ENCODE measurements at regions of chr1 and their contacts with region 1.

Region 1: GRCh38 chr1:32107742-32108661 is at the start of gene KPNA6:
- DNase-seq: peak; percentile 89
- ATAC-seq: peak; percentile 77
- H3K4me3 Mint-ChIP-seq: peak within 1 kb of the TSS; percentile 99
- H3K27ac Mint-ChIP-seq: peak within 1 kb of the TSS; percentile 98
- H3K4me1 Mint-ChIP-seq: peaks cover 34% of the 10 kb centered on the region
- H3K27me3 Mint-ChIP-seq: no peaks in the 10 kb centered on the region
- total RNA-seq, gene KPNA6: 63.8 to 69.8 TPM

Region 2: DNA sequence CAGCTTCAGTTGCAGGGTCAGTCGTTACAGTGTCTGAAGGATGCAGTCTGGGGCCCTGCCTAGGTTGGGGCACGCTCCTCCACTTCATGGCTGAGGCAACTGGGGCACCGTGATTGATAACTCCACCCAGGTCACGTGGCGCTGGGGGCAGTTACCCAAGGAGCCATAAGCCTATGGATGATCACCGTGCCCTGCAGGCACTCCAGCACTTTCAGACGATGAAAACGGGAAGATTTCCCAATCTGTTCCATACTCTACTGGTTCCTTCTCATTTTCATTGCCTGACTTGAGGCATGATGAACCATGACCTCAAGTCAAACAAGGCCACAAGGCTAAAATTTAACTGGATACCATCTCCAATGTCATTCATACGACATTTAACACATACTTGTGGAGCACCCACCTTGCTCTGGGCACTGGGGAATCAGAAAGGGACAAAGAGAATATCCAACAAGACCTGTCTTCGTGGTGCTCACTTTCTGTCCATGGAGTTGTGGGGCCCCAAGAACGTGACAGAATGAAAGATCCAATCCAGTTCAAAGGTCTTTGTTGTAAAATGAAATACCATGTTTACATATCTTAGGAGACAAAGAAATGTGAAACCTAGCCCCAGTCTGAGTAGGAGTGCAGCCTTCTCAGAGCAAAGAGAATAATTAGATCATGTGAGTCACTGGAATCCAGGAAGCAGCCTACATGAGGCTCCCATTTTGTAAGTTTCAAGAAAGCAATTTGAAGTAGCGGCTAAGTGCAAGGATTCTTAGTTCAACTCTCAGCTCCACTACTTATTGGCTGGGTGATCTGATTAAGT is 252.8 kb before region 1 on chr1:
- POLR2A ChIA-PET with region 1: no interaction called
- DNase-seq: no peak
- ATAC-seq: no peak
- H3K4me3 Mint-ChIP-seq: no peak overlapping the region
- H3K27ac Mint-ChIP-seq: no peak overlapping the region
- H3K4me1 Mint-ChIP-seq: peaks cover 2% of the 10 kb centered on the region
- H3K27me3 Mint-ChIP-seq: peaks cover 2% of the 10 kb centered on the region

Region 3: DNA sequence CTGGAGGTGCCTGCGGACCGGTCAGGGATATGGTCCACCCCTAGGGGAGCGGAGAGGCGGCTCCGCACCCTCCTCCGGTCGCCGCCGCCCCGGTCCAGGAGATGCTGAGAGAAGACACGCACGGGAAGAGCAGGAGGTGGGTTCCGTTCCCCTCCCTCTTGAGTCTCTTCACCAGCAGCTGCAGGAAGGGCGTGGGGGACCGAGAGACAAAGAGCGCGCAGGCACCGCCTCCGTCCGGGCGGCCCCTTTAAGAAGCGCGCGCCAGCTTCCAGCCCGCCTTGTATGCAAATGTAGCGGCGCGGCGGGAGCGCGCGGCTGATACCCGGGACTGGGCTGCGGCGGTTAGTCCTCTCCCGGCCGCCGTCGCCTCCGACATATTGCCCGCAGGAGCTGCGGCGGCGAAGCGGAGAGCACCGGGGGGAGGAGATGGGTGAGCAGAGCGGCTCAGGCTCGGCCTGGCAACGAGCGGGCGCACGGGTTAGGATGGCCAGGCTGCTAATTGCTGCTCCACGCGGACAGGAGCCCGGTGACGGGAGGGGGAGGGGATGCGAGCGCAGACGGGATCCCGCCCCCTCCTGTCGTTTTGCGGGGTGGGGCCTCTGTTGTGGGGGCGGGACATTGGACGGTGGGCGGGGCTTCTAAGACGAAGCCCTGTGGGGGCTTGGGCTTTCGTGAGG is 35.2 kb before region 1 on chr1 and contains the start of gene TMEM39B:
- POLR2A ChIA-PET with region 1: interaction called, 36 read pairs
- DNase-seq: peak; percentile 97
- ATAC-seq: peak; percentile 89
- H3K4me3 Mint-ChIP-seq: peak within 1 kb of the TSS; percentile 94
- H3K27ac Mint-ChIP-seq: peak within 1 kb of the TSS; percentile 90
- H3K4me1 Mint-ChIP-seq: peaks cover 40% of the 10 kb centered on the region
- H3K27me3 Mint-ChIP-seq: peaks cover 10% of the 10 kb centered on the region
- total RNA-seq, gene TMEM39B: 27.1 to 28.4 TPM

Region 4: DNA sequence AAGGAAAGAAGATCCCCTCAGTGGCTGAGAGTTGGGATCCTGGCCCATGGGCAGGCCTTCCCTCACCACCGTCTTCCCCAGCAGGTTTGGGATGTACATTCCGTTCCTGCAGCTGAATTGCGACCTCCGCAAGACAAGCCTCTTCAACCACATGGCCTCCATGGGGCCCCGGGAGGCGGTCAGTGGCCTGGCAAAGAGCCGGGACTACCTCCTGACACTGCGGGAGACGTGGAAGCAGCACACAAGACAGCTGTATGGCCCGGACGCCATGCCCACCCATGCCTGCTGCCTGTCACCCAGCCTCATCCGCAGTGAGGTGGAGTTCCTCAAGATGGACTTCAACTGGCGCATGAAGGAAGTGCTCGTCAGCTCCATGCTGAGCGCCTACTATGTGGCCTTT is 16.4 kb before region 1 on chr1:
- POLR2A ChIA-PET with region 1: no interaction called
- DNase-seq: no peak
- ATAC-seq: no peak
- H3K4me3 Mint-ChIP-seq: no peak overlapping the region
- H3K27ac Mint-ChIP-seq: no peak overlapping the region
- H3K4me1 Mint-ChIP-seq: no peaks in the 10 kb centered on the region
- H3K27me3 Mint-ChIP-seq: no peaks in the 10 kb centered on the region

Region 5: GRCh38 chr1:32122151-32122550 is 14.1 kb after region 1 on chr1:
- POLR2A ChIA-PET with region 1: interaction called, 15 read pairs
- DNase-seq: no peak
- ATAC-seq: no peak
- H3K4me3 Mint-ChIP-seq: peak overlapping the region; percentile 56
- H3K27ac Mint-ChIP-seq: peak overlapping the region; percentile 80
- H3K4me1 Mint-ChIP-seq: peaks cover 24% of the 10 kb centered on the region
- H3K27me3 Mint-ChIP-seq: no peaks in the 10 kb centered on the region

Region 6: DNA sequence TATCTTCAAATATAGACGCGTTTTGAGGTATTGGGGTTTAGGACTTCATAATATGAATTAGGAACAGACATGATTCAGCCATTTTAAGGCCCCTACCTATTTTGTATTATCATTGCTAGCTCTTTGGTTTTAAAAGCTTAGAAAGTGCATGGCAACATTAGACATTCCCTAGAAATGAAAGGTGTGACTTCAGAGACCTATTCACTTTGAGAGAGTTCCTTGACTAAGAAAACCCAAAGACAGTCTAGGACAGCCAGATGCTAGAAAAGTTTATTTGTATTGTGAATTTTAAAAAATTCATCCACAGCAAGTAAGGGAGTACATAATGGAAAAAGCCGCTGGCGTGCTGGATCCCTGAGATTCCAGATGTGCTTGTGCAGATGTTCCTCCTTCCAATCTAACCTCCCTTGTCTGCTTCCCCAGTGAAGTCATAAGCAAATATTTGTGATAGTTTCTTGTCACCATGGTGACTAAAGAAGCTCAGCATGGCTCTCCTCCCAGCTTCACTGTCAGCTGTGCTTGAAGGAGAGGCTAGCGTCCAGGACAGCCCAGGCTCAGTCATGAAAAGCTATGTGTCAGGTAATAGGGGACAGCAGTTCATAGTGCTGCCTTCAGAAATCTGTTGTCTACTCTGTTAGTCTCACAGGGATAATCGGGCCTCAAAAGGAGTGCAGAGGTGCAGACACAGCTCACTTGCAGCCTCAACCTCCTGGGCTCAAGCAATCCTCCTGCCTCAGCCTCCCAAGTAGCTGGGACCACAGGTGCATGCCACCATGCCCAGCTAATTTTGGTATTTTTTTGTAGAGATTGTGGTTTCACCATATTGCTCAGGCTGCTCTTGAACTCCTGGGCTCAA is 34.7 kb after region 1 on chr1:
- POLR2A ChIA-PET with region 1: interaction called, 14 read pairs
- DNase-seq: no peak
- ATAC-seq: no peak
- H3K4me3 Mint-ChIP-seq: no peak overlapping the region
- H3K27ac Mint-ChIP-seq: no peak overlapping the region
- H3K4me1 Mint-ChIP-seq: peaks cover 25% of the 10 kb centered on the region
- H3K27me3 Mint-ChIP-seq: no peaks in the 10 kb centered on the region

Region 7: GRCh38 chr1:32179443-32180185 is 71.6 kb after region 1 on chr1 and contains the start of gene TXLNA:
- POLR2A ChIA-PET with region 1: interaction called, 14 read pairs
- DNase-seq: peak; percentile 93
- ATAC-seq: peak; percentile 89
- H3K4me3 Mint-ChIP-seq: peak within 1 kb of the TSS; percentile 92
- H3K27ac Mint-ChIP-seq: peak within 1 kb of the TSS; percentile 98
- H3K4me1 Mint-ChIP-seq: peaks cover 28% of the 10 kb centered on the region
- H3K27me3 Mint-ChIP-seq: no peaks in the 10 kb centered on the region
- total RNA-seq, gene TXLNA: 62.5 to 68.8 TPM

Region 8: DNA sequence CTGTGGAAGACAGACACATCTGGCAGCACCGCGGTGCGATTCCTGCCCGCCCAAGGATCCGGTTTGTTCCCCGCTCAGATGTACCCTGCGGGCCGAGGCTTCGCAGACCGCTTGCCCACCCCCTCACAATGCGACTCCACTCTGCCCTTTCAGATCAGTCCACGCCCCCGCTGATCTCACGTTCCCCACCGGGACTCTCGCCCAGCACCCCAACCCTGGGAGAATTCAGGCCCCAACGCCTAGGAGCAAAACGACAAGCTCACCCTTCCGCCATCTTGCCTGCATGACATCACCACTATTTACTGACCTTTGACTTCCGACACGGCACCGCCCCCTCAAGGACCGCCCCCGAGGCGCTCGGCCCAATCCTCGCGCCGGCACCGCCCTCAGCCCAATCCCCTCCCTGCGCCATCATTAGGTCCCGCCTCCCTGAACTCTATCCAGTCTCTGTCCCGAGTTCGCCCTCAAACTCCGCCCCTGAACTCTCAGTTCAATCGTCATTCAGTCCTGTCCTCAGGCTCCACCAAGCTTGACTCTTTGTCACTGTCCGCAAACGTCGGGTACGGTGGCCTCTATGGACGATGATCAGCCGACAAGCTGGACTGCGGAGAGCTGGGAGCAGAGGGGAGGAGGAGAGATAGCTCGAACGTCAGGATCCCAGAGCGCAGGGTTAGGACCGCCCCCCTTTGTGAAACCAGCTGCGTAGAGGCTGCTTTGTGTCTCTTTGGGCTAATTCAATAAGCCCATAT is 286.3 kb after region 1 on chr1 and contains the start of gene BSDC1:
- POLR2A ChIA-PET with region 1: interaction called, 10 read pairs
- DNase-seq: peak; percentile 98
- ATAC-seq: peak; percentile 96
- H3K4me3 Mint-ChIP-seq: peak within 1 kb of the TSS; percentile 100
- H3K27ac Mint-ChIP-seq: peak within 1 kb of the TSS; percentile 99
- H3K4me1 Mint-ChIP-seq: peaks cover 10% of the 10 kb centered on the region
- H3K27me3 Mint-ChIP-seq: peaks cover 2% of the 10 kb centered on the region
- total RNA-seq, gene BSDC1: 58.0 to 63.2 TPM

Measured in activated naive CD8-positive, alpha-beta T cell treated with anti-CD3 and anti-CD28 coated beads, Interleukin-2, amount 10 ng/mL, durations not matched to agents 7 days and 5 days (primary cell).